Left cardiac atrium (tissue), 4 donors: ENCODE measurements at regions of chr19 and their contacts with region 1.

Region 1: DNA sequence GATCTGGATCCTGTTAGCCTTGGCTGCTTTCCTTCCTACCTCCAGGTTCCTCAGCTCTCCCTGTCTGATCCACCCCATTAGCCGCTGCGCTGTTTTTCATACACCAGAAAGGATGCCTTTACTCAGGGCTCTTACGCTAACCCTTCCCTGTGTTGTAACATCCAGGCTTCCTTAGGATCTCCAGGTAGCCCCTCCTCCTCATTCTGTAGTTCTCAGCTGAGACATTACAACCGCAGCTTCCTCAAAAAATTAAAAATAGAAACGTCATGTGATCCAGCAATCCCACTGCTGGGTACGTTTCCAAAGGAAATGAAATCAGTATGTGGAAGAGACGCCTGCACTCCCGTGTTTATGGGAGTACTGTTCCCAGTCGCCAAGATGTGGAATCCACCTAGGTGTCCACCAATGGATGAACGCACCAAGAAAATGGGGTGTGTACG is 18.4 kb upstream of the MYADM start:
- DNase-seq: peak; percentile 38
- ATAC-seq: peak; percentile 41 to 75

Region 2: GRCh38 chr19:53730390-53730789 is 118.9 kb before region 1 on chr19:
- intact Hi-C with region 1: no loop called
- DNase-seq: no peak
- ATAC-seq: no peak

Region 3: DNA sequence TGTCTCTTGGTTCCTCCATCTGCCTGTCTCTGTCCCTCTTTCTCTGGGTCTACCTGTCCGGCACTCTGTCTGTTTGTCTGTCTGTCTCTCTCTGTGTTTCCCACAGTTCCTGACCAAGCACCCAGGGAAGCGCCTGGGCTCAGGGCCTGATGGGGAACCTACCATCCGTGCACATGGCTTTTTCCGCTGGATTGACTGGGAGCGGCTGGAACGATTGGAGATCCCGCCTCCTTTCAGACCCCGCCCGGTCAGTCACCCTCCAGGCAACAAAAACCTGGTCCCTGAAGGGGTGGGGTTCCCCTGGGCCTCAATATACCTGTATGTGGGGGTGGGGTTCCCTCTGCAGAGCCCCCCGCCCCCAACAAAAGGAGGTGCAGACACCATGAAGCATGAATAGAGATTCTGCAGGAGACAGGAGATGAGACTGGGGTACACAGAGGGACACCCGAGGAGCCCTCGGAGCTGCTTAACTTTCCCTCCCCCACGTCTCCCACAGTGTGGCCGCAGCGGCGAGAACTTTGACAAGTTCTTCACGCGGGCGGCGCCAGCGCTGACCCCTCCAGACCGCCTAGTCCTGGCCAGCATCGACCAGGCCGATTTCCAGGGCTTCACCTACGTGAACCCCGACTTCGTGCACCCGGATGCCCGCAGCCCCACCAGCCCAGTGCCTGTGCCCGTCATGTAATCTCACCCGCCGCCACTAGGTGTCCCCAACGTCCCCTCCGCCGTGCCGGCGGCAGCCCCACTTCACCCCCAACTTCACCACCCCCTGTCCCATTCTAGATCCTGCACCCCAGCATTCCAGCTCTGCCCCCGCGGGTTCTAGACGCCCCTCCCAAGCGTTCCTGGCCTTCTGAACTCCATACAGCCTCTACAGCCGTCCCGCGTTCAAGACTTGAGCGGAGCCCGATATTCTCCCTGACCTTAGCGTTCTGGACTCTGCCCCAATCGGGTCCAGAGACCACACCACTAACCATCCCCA is 57.2 kb after region 1 on chr19:
- intact Hi-C with region 1: loop called in 1 of 2 experiments (anchors 10 kb)
- DNase-seq: peak; percentile 51
- ATAC-seq: peak; percentile 51 to 62

Region 4: DNA sequence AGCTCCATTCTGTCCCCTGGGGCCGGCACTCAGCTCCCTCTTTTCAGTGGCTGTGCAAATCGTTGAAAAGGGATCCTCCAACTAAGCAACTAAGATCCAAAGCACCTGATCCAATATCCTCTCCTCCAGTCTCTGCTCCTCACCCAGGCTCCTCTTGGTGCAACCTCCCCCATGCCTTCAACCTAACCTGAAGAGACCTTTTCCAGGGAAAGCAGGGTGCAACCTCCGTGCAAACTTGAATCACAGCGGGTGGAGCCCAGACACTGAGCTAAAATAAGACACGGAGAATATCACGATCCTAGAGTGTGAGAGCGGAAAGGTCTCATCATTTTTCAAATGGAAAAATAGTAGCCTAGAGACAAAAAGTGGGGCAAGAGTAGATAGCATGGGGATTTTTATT is 68.1 kb after region 1 on chr19:
- intact Hi-C with region 1: no loop called
- DNase-seq: no peak
- ATAC-seq: no peak

Region 5: GRCh38 chr19:54023191-54023590 is 173.9 kb after region 1 on chr19:
- intact Hi-C with region 1: loop called (anchors 5 kb)
- DNase-seq: no peak
- ATAC-seq: no peak